CD8-positive, alpha-beta memory T cell (primary cell): ENCODE measurements at regions of chr10 and their contacts with region 1.

Region 1: DNA sequence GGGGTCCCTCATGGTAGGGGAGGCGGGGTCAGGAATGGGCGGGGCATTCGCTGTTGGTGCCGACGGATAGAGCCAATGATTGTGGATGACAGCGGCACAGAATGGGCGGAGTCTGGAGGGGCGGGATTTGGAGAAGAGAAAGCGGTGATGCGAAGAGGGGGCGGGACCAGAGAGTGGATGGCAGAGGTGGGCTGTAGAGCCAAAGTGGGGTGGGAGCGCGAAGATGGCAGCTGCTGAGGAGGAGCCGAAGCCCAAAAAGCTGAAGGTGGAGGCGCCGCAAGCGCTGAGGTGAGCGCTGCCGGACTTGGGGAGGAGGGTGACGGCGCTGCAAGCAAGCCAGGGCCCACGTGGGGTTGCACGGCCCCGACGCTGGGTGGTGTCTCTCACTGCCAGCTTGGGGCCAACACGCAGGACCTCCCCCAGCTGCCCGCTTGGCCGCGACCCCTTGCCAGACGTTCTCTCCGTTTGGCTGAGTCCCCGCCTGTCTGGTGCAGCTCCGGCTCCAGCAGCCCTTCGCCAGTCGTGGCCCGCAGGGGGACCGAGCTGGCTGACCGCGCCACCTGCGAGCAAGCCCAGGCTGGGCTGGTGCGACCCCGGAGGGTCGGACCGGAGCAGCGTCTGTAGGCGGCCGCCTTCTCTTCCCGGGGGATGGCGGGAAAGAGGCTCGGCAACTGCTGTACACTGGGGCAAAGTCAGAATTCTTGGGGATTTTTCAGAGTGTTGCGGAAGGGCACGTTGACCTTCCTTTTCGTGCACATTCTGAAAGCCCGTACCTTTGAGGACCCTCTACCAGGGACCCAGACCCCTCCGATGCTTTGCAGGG is at the start of gene ADK:
- DNase-seq: peak; percentile 99 to 100 (median 100)
- H3K4me3 ChIP-seq: peak within 1 kb of the TSS; percentile 89
- H3K4me3 Mint-ChIP-seq: no peak within 1 kb of the TSS
- H3K27ac ChIP-seq: peak within 1 kb of the TSS; percentile 88
- H3K27ac Mint-ChIP-seq: peak within 1 kb of the TSS in 4 of 8 donors; percentile 39 to 93 (median 54)
- H3K4me1 ChIP-seq: peaks cover 32% of the 10 kb centered on the region
- H3K4me1 Mint-ChIP-seq: peaks cover 38 to 58% (median 51%) of the 10 kb centered on the region in 3 donors
- H3K27me3 ChIP-seq: no peaks in the 10 kb centered on the region
- H3K27me3 Mint-ChIP-seq: no peaks in the 10 kb centered on the region
- total RNA-seq, gene ADK: 64.4 to 65.1 TPM

Region 2: DNA sequence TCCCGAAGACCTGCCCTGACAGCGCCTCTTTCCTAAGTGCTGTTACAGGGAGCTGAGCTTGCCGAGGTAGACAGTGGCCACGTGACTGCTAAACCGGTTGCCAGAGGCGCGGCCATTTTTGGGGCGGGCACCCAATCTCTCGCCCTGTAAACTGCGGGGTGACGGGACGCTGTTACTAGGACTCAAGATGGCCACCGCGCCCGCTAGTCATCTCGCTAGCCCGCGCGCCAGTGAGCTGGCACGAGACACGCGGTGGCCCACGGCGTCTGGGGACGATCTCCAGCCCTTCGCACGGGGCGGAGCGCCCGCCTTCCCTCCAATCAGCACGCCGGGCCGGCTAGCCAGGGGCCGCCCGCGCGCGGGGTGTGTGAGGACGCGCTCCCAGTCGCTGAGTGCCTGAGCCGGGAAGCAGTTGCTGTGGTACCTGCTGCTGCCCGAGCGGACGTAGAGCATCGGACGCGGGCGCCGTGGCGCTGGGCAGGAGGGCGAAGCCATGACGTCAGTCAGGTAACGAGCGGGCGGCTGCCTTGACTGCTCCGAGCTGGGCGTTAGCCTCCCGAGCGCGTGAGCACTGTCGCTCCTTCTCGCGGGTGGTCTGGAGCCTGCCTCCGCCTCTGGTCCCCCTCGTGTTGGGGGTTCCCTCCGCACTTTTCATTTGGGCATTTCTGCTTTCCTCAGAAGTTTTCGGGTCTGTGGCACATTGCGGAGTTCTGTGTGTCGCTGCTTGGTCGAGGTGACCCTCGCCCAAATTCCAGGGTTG is 25.3 kb after region 1 on chr10:
- CTCF ChIA-PET with region 1: interaction called, 8 read pairs
- POLR2A ChIA-PET with region 1: interaction called, 12 read pairs
- DNase-seq: peak; percentile 96 to 97 (median 96)
- H3K4me3 ChIP-seq: peak overlapping the region; percentile 97
- H3K4me3 Mint-ChIP-seq: peak overlapping the region; percentile 91 to 94 (median 93)
- H3K27ac ChIP-seq: peak overlapping the region; percentile 94
- H3K27ac Mint-ChIP-seq: peak overlapping the region; percentile 93 to 98 (median 98)
- H3K4me1 ChIP-seq: peaks cover 33% of the 10 kb centered on the region
- H3K4me1 Mint-ChIP-seq: peaks cover 33 to 50% (median 48%) of the 10 kb centered on the region in 3 donors
- H3K27me3 ChIP-seq: no peaks in the 10 kb centered on the region
- H3K27me3 Mint-ChIP-seq: no peaks in the 10 kb centered on the region

Region 3: DNA sequence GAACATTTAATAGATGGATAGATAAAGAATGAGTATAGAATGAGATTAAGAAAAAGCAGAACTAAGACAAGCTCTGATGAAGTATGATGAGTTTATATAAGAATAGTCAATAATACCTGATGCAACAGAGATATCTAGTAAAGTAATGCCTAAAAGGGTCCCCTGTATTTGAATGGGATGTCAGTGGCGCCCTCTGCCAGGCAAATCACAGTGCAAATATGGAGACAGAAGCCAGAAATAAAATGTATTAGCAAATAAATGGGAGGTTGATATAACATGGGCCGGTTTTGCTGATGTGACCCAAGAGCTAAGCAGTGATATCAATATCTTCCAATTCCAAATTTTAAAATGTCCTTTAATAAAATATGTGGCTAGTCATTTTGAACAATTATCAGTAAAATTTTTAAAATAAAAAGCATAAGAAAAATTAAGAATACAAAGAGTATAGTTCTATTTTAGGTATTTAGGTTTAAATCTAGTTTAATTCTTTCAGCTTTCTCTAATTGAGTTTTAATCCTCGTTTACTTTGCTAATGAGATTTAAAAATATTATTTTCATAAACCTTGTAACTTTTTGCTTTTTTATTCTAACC is 62.4 kb after region 1 on chr10:
- CTCF ChIA-PET with region 1: interaction called, 13 read pairs
- POLR2A ChIA-PET with region 1: no interaction called
- DNase-seq: peak in 4 of 5 donors; percentile 18 to 67 (median 29)
- H3K4me3 ChIP-seq: no peak overlapping the region
- H3K4me3 Mint-ChIP-seq: no peak overlapping the region
- H3K27ac ChIP-seq: no peak overlapping the region
- H3K27ac Mint-ChIP-seq: peak overlapping the region in 4 of 8 donors; percentile 9 to 79 (median 32)
- H3K4me1 ChIP-seq: no peaks in the 10 kb centered on the region
- H3K4me1 Mint-ChIP-seq: peaks cover 17 to 36% (median 32%) of the 10 kb centered on the region in 3 donors
- H3K27me3 ChIP-seq: no peaks in the 10 kb centered on the region
- H3K27me3 Mint-ChIP-seq: no peaks in the 10 kb centered on the region

Region 4: DNA sequence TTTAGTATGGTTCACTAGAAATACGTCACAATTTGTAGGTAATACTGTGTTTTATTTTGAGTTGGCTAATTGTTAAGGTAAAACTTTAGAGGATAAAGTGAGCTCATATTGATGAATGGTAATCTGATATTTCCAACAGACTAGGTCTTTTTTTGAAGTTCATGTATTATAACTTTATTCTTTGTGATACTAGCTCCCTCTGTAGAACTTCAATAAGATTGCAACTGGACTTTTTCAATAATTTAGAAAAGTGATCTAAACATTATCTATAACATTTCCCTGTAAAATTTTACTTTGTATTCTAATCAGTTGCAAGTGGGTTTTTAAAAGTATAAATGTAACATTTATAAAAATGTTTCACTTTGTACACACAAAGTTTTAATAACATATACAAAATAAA is 83.3 kb after region 1 on chr10:
- CTCF ChIA-PET with region 1: interaction called, 19 read pairs
- POLR2A ChIA-PET with region 1: no interaction called
- DNase-seq: peak in 2 of 5 donors; percentile 16 to 17
- H3K4me3 ChIP-seq: no peak overlapping the region
- H3K4me3 Mint-ChIP-seq: no peak overlapping the region
- H3K27ac ChIP-seq: no peak overlapping the region
- H3K27ac Mint-ChIP-seq: no peak overlapping the region
- H3K4me1 ChIP-seq: no peaks in the 10 kb centered on the region
- H3K4me1 Mint-ChIP-seq: peaks cover 8 to 35% (median 21%) of the 10 kb centered on the region in 3 donors
- H3K27me3 ChIP-seq: no peaks in the 10 kb centered on the region
- H3K27me3 Mint-ChIP-seq: no peaks in the 10 kb centered on the region